Tibial artery (tissue), 4 donors: ENCODE measurements at regions of chr1 and their contacts with region 1.

Region 1: DNA sequence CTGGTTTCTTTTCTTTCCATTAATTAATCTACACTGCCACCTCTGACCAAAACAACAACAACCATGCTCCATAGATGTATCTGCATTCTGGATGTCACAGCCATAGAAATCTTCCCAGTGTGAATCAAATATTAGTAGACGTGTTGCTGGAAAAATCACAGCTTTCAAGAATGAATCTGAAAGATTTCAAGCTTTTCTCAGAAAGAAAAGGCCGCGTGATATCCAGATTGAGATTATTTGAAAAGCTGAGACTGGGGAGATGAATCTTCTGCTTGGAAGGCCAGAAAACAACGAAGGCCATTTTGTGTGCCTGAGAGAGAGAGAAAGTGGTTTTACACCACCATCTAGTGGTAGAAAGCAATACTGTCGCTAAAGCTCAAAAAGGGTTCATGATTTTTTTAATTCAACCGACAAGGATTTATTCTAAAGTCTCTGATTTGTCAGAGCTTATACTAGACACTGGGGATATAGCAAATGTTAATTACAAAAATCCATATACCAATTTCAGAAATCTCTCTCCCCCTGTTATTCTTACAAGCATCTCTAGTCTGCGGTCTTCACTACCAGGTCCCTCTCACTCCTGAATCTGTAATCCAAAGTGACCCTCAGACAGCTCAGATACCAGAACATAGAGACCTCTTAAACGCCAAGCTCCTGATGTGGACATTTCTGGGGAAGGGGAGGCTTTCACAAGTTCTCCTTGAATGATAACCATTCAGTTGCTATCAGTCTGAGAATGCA is 87.5 kb upstream of the SGIP1 start:
- DNase-seq: no peak
- H3K4me3 ChIP-seq: no peak overlapping the region
- H3K27ac ChIP-seq: peak overlapping the region; percentile 38 to 74
- H3K4me1 ChIP-seq: peaks cover 0 to 49% (median 17%) of the 10 kb centered on the region in 4 donors
- H3K27me3 ChIP-seq: no peaks in the 10 kb centered on the region
- CTCF ChIP-seq: peak; percentile 82 to 97

Region 2: GRCh38 chr1:66253330-66253921 is 193.0 kb before region 1 on chr1:
- intact Hi-C with region 1: loop called (anchors 2 kb)
- DNase-seq: no peak
- H3K4me3 ChIP-seq: no peak overlapping the region
- H3K27ac ChIP-seq: no peak overlapping the region
- H3K4me1 ChIP-seq: peaks cover 0 to 13% (median 1%) of the 10 kb centered on the region in 4 donors
- H3K27me3 ChIP-seq: no peaks in the 10 kb centered on the region
- CTCF ChIP-seq: peak; percentile 81 to 86

Region 3: DNA sequence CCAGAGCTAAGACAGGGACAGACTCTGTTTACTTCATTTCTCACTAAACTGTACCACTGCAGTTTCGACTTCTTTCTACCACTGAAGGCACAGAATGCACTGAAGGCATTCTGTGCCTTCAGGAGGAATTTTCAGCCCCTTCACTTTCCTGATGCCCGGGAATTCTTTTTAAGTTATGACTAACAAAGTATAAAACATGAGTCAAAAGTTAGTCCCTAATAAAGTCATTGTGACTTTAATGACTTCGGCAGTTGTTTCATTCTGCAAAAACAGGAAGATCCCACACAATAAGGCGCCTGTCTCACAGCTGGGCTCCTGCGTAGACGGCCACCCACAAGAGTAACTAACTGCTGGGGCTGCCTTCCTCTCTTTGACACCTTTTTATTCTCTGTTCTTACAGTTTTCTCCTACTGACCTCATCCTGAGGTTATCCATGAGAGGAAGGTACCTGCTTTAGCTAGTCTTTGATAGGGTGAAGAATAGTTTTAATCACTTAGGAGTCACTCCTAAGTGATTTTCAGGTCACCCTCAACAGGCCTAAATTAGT is 96.4 kb before region 1 on chr1:
- intact Hi-C with region 1: loop called (anchors 10 kb)
- DNase-seq: no peak
- H3K4me3 ChIP-seq: peak overlapping the region in 1 of 2 donors; percentile 12
- H3K27ac ChIP-seq: peak overlapping the region; percentile 42 to 56
- H3K4me1 ChIP-seq: peaks cover 0 to 61% (median 30%) of the 10 kb centered on the region in 4 donors
- H3K27me3 ChIP-seq: no peaks in the 10 kb centered on the region
- CTCF ChIP-seq: no peak

Region 4: DNA sequence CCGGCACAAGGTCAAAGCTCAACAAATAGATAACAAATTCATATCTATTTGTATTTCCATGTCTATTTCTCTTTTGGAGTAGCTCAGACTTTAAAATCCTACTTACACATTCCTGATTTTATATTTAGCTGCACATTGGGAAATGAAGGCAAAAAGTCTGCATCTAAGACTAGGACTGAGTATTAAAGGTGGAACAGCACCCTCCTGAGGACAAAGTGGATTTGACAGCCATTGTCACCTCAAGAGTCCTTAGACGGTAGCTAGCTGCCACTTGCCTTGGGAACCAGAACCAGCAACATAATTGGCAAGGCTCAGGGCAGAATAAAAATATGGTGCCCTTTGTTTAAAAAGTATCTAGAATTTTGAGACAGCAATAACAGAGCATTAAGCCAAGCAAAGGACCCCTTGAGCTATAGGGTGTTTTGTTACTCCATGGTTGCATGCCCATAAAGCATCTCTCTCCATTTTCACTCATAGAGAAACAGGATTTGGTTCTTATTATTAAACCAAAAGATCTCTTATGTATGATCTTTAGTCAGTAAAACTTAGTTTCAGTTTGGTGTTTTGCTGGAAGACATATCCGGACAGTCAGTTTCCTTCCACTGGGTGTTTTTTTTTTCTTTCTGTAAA is 57.5 kb after region 1 on chr1:
- intact Hi-C with region 1: loop called (anchors 5 kb)
- DNase-seq: peak in 1 of 2 donors; percentile 43
- H3K4me3 ChIP-seq: no peak overlapping the region
- H3K27ac ChIP-seq: no peak overlapping the region
- H3K4me1 ChIP-seq: peaks cover 0 to 15% (median 0%) of the 10 kb centered on the region in 4 donors
- H3K27me3 ChIP-seq: no peaks in the 10 kb centered on the region
- CTCF ChIP-seq: peak; percentile 65 to 71

Region 5: DNA sequence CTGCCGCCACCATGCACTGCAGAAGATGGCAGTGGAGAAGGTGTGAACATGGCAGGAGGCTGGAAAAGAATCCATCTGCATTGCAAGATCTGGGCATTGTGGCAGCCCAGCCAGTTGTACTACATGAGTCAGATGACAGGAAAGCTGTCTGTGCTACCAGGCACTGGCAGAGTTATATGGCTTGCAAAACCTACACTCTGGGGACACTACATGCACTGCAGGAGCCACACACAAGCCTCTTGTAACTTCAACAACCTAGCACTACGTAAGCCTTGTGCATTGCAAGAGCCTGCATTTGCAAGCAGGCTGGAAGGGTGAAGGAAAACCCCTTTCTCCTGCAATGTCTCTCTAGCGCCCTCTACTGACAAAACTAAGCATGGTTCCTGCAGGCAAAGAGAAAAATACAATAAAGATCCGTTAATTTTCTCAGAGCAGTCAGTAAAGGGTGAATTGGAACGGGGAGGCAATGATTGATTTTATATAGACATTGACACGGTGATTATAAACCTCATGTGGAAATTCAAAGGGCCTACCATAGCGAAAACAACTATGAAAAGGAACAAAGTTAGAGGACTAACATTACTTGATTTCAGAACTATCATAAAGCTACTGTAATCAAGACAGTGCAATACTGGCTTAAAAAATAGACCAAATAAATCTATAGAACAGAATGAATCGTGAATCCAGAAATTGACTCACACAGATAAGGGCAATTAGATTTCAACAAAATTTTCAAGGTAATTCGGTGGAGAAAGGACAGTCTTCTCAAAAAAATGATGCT is 279.6 kb after region 1 on chr1:
- intact Hi-C with region 1: loop called (anchors 10 kb)
- DNase-seq: peak; percentile 69 to 83
- H3K4me3 ChIP-seq: no peak overlapping the region
- H3K27ac ChIP-seq: peak overlapping the region; percentile 36 to 38
- H3K4me1 ChIP-seq: peaks cover 0 to 12% (median 9%) of the 10 kb centered on the region in 4 donors
- H3K27me3 ChIP-seq: no peaks in the 10 kb centered on the region
- CTCF ChIP-seq: peak; percentile 87 to 99